ENCODE measurements at regions of chr2 and their contacts with region 1.

Region 1: DNA sequence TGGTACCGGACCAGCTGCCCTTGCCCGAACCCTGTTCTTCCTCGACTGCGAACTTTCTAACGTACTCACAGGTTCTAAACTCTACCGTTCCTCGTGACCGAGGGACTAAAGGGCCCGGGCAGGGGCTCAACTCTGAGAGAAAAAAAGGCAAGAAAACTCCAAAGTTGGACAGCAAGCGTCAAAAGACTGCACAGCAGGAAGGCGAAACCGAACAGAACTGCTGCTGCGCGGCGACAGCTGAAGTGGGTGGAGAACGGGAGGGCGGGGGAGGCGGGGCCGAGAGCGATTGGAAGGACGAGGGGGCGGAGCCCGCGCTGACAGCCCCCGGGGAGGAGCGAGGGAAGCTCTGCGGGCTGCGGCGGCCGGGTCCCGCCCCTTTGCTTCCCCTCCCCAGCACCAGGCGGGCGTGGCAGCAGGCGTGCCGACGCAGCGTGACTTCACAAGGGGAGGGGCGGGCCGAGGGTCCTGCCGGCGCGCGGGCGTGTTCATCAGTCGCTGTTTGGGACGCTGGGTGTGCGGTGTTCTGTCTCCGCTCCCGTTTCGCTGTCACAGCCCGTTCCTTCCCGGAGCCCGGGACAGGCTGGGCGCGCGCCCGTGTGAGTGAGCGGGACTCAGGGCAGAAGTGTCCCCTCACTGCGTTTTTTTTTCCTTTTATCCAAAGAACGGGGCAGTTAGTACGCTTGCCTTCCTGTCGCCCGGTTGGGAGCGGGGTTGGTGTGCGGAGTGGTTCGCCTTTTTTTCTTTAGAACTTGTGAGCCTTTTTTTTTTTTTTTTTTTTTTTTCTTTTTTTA is at the start of gene NABP1:
- DNase-seq: peak; percentile 86
- ATAC-seq: peak; percentile 94
- H3K4me3 ChIP-seq: peak within 1 kb of the TSS; percentile 71 to 77
- H3K27ac ChIP-seq: peak within 1 kb of the TSS; percentile 75
- H3K4me1 ChIP-seq: peaks cover 19 to 28% of the 10 kb centered on the region in 2 experiments
- H3K27me3 ChIP-seq: no peaks in the 10 kb centered on the region
- CTCF ChIP-seq: no peak
- POLR2A ChIP-seq: peak; percentile 97
- RAD21 ChIP-seq: no peak
- total RNA-seq, gene NABP1: 39.3 TPM

Region 2: DNA sequence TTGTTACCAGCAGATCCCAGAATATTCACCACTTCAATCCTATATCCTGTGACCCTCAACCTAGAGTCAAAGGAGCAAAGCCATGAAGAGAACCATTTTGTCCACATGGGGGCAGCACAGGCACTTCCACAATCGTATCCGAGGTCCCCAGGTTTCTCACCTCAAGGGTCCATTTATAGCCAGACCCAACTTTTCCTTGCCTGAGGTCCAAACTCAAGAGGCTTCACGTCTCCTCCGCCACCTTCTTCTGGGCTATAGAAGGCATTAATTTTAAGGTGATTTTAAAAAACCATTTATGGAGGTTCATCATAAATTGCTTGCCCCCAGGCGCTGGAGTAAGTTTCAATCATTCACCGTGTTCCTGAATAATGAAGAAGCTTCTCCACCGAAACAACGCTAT is 111.5 kb before region 1 on chr2:
- CTCF ChIA-PET with region 1: interaction called, 4 read pairs
- POLR2A ChIA-PET with region 1: interaction called, 10 read pairs
- RAD21 ChIA-PET with region 1: no interaction called
- intact Hi-C with region 1: no loop called
- DNase-seq: peak; percentile 57
- ATAC-seq: peak; percentile 89
- H3K4me3 ChIP-seq: no peak overlapping the region
- H3K27ac ChIP-seq: no peak overlapping the region
- H3K4me1 ChIP-seq: peaks cover 2 to 7% of the 10 kb centered on the region in 2 experiments; a peak in 2 of 4 replicates
- H3K27me3 ChIP-seq: no peaks in the 10 kb centered on the region
- CTCF ChIP-seq: peak; percentile 67 to 85 (median 81)
- POLR2A ChIP-seq: no peak
- RAD21 ChIP-seq: peak; percentile 84

Region 3: GRCh38 chr2:191656391-191656790 is 21.4 kb before region 1 on chr2:
- CTCF ChIA-PET with region 1: no interaction called
- POLR2A ChIA-PET with region 1: interaction called, 18 read pairs
- RAD21 ChIA-PET with region 1: no interaction called
- intact Hi-C with region 1: no loop called
- DNase-seq: no peak
- ATAC-seq: no peak
- H3K4me3 ChIP-seq: no peak overlapping the region
- H3K27ac ChIP-seq: no peak overlapping the region
- H3K4me1 ChIP-seq: no peaks in the 10 kb centered on the region
- H3K27me3 ChIP-seq: no peaks in the 10 kb centered on the region
- CTCF ChIP-seq: no peak
- POLR2A ChIP-seq: no peak
- RAD21 ChIP-seq: no peak

Region 4: DNA sequence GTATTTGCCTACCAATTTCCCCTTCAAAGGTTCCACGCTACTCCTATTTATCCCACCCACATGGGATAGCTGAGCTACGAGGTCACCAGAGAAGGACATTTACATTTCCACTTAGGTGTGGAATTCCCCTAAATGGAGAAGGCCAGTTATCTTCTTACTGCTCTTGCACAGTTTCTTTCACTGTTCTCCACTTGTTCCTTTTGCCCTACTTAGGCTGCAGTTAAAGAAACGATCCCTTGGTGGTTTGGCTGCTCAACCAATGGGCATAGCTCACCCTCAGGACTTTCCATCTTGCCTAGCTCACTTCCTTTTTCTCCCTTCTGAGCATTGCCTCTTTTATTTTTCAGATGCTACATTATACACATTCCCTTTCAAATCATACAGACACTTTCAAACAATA is 11.1 kb before region 1 on chr2:
- CTCF ChIA-PET with region 1: no interaction called
- POLR2A ChIA-PET with region 1: interaction called, 35 read pairs
- RAD21 ChIA-PET with region 1: no interaction called
- intact Hi-C with region 1: no loop called
- DNase-seq: no peak
- ATAC-seq: no peak
- H3K4me3 ChIP-seq: no peak overlapping the region
- H3K27ac ChIP-seq: no peak overlapping the region
- H3K4me1 ChIP-seq: peaks cover 0 to 4% of the 10 kb centered on the region in 2 experiments; a peak in 1 of 4 replicates
- H3K27me3 ChIP-seq: no peaks in the 10 kb centered on the region
- CTCF ChIP-seq: no peak
- POLR2A ChIP-seq: no peak
- RAD21 ChIP-seq: no peak

Region 5: DNA sequence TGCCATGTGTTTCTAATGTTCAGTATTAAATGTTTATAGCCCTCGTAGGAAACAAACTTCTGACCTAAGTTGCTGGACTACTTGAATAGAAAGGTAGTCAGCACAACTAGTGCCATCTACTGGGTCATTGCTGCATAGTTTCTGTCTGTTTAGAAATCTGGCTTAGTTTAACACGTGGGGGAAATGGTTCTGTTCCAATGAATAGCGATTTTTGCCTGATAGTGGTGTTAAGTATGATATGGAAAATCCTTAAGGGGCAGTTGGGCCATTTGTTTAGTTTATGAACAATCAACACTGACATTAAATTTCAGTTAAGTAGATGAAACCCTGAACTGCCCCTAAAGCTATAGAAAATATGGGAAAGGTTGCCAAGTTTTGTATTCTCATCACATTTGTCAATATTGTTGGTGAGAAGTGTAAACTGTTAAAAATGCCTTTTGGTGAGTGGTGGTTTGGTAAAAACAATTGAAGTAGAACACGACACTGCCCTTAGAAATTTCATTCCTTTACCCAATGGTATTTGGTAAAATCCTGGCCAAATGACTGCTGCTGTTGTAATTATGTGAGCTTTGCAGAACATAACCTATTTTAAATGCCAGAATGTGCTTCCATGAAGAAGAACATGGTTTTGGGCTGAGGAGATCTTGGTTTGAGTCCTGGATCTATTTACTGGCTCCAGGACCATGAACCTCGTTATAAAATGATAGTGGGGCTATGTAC is 13.3 kb after region 1 on chr2:
- CTCF ChIA-PET with region 1: interaction called, 3 read pairs
- POLR2A ChIA-PET with region 1: interaction called, 11 read pairs
- RAD21 ChIA-PET with region 1: no interaction called
- intact Hi-C with region 1: no loop called
- DNase-seq: peak; percentile 61
- ATAC-seq: peak; percentile 79
- H3K4me3 ChIP-seq: no peak overlapping the region
- H3K27ac ChIP-seq: no peak overlapping the region
- H3K4me1 ChIP-seq: peaks cover 19 to 37% of the 10 kb centered on the region in 2 experiments
- H3K27me3 ChIP-seq: no peaks in the 10 kb centered on the region
- CTCF ChIP-seq: peak; percentile 68 to 82 (median 73); a peak in 5 of 6 replicates
- POLR2A ChIP-seq: no peak
- RAD21 ChIP-seq: peak; percentile 83

Region 6: DNA sequence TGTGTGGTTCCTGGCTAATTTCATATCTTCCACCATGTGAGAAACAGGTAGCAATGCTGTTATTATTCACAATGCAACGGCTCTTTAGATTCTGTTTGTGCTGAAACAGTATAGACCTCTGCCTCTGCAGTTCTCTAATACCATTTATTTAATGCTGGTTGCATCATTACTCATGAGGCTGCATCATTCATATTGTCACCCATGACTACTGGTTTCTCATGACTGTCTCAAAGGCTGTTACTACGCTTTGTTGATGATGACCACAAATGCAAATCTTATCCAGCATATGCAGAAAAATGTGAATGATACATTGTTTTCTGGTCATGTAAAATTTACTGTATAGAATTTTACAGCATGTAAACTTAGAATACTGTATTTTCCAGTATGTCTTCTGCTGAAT is 146.6 kb after region 1 on chr2:
- CTCF ChIA-PET with region 1: no interaction called
- POLR2A ChIA-PET with region 1: no interaction called
- RAD21 ChIA-PET with region 1: no interaction called
- intact Hi-C with region 1: no loop called
- DNase-seq: no peak
- ATAC-seq: no peak
- H3K4me3 ChIP-seq: no peak overlapping the region
- H3K27ac ChIP-seq: no peak overlapping the region
- H3K4me1 ChIP-seq: no peaks in the 10 kb centered on the region
- H3K27me3 ChIP-seq: no peaks in the 10 kb centered on the region
- CTCF ChIP-seq: no peak
- POLR2A ChIP-seq: no peak
- RAD21 ChIP-seq: no peak

Measured in HCT116 (cell line).